Activated T-helper 1 cell treated with anti-CD3 and anti-CD28 coated beads, Interleukin-12 subunit alpha, Interleukin-12 subunit beta, Interleukin-2, Interleukin-4 antibody, amounts not matched to agents 30 ng/mL and 10 ng/mL and 1 ng/mL, durations not matched to agents 14 hours and 24 hours and 36 hours (primary cell): ENCODE measurements at regions of chr6 and their contacts with region 1.

Region 1: DNA sequence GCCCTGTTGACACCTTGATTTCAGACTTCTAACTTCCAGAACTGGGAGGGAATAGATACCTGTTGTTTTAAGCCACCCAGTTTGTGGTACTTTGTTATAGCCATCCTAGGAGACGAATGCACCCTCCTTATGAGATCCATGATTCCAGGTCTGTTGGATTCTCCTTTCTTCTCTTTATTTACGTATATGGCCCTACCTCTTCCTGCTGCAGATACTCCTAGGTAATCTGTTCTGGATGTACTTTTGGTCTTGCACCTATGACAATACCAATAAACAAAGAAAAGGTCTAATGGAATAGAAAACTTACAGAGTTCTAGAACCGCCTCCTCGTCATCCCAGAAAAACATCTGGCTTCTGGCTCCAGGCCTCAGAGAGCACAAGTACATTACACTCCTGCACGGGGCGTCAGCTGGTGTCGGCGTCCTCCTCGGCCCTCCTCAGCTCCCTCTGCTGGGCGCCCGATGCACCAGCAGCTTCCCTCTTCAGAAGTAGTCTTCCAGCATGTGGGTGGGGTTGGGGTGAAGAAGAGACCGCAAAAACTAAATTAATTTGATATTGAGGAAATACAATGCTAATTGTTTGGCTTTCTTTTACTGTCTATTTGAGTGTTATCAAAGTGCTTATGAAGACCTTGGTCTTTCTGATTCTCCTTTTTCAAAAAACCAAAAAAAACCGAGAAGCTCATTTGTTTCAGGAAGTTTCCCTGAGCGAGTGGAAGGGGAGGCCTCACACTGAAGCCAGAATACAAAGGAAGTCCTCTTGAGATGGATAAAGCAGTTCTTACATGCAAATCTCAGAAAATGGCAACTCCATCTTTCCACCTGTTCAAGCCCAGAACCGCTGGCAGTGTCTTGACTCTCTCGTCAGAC is 9.7 kb upstream of the ATXN1 start:
- DNase-seq: peak; percentile 68
- H3K4me3 Mint-ChIP-seq: peak overlapping the region; percentile 12
- H3K27ac Mint-ChIP-seq: no peak overlapping the region
- H3K4me1 Mint-ChIP-seq: peaks cover 47% of the 10 kb centered on the region
- H3K27me3 Mint-ChIP-seq: no peaks in the 10 kb centered on the region

Region 2: GRCh38 chr6:16409531-16410441 is 361.1 kb before region 1 on chr6:
- intact Hi-C with region 1: loop called (anchors 5 kb)
- DNase-seq: peak; percentile 34
- H3K4me3 Mint-ChIP-seq: no peak overlapping the region
- H3K27ac Mint-ChIP-seq: peak overlapping the region; percentile 56
- H3K4me1 Mint-ChIP-seq: peaks cover 74% of the 10 kb centered on the region
- H3K27me3 Mint-ChIP-seq: no peaks in the 10 kb centered on the region

Region 3: DNA sequence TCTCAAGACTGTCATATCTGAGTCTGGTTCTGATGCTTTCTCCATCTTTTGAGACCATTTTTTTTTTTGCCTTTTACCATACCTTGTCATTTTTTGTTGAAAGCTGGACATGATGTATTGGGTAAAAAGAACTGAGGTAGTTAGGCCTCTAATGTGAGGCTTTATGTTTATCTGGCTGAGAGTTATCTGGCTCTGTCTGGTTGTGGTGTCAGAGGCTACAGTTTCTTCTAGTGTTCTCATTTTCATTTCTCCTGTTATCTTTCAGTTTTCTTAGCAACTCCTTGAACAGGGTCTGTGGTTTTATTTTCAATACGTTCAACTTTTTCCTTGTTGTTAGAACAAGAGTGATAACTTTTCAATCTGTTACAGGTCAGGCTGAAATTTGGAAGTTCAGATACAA is 39.5 kb after region 1 on chr6:
- intact Hi-C with region 1: no loop called
- DNase-seq: no peak
- H3K4me3 Mint-ChIP-seq: no peak overlapping the region
- H3K27ac Mint-ChIP-seq: no peak overlapping the region
- H3K4me1 Mint-ChIP-seq: no peaks in the 10 kb centered on the region
- H3K27me3 Mint-ChIP-seq: peaks cover 5% of the 10 kb centered on the region

Region 4: GRCh38 chr6:16836144-16836981 is 65.4 kb after region 1 on chr6:
- intact Hi-C with region 1: loop called (anchors 2 kb)
- DNase-seq: no peak
- H3K4me3 Mint-ChIP-seq: peak overlapping the region; percentile 59
- H3K27ac Mint-ChIP-seq: peak overlapping the region; percentile 73
- H3K4me1 Mint-ChIP-seq: peaks cover 25% of the 10 kb centered on the region
- H3K27me3 Mint-ChIP-seq: peaks cover 8% of the 10 kb centered on the region

Region 5: DNA sequence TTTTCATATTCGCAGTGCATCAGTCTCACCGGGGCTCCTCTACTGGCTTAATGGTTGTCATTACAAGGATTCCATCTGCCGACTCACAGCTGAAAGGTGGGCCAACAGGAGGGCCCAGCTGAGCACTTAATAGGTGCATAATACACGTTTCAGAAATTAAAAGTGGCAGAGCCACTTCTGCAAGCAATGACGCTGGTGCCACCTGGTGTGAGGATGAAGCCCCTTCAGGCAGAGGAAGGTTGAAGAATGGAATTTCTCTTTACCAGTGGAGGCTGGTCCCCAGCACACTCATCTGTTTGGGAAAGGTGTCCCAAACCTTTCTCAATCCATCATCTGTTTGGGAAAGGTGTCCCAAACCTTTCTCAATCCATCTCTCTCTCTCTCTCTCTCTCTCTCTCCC is 322.8 kb after region 1 on chr6:
- intact Hi-C with region 1: loop called (anchors 5 kb)
- DNase-seq: no peak
- H3K4me3 Mint-ChIP-seq: no peak overlapping the region
- H3K27ac Mint-ChIP-seq: no peak overlapping the region
- H3K4me1 Mint-ChIP-seq: no peaks in the 10 kb centered on the region
- H3K27me3 Mint-ChIP-seq: peaks cover 8% of the 10 kb centered on the region